Activated CD4-positive, alpha-beta memory T cell treated with anti-CD3 and anti-CD28 coated beads, Interleukin-2, amount 10 ng/mL, durations not matched to agents 7 days and 5 days (primary cell): ENCODE measurements at regions of chr6 and their contacts with region 1.

Region 1: DNA sequence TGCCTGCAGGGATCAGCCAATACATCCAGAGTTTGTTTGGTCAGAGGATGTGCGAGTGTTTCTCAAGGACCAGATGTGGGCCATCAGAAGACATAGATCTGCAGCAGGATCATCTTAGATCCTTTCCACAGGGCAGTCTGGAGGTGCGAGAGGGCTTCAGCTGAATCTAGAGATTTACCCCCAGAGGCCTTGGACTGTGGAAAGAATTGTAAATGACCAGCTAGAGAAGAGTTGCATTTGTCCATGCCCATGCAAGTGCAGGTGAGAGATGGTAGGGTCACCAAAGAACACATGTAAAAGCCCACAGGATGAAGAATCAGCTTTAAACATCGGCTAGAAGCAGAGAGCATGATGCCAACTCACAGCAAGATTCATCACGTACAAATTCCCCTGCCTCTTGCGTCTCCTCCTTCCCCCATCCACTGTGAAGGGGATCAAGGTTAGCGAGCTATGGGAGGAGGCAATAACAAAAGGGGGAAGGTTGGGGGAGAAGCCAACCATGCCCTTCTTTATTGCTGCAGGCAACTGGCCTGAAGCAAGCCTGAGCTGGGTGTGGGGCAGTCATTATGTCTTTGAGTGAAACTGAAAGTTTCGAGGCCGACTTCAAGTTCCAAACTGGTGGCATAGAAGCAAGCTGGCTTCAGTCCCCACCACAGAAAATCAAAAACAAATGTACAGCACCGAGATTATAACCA is 83.5 kb downstream of the SCML4 start:
- DNase-seq: peak; percentile 45
- H3K4me3 Mint-ChIP-seq: peak overlapping the region; percentile 57
- H3K27ac Mint-ChIP-seq: peak overlapping the region; percentile 66
- H3K4me1 Mint-ChIP-seq: peaks cover 51% of the 10 kb centered on the region
- H3K27me3 Mint-ChIP-seq: peaks cover 9% of the 10 kb centered on the region

Region 2: GRCh38 chr6:107634324-107635056 is 106.2 kb before region 1 on chr6:
- CTCF ChIA-PET with region 1: no interaction called
- POLR2A ChIA-PET with region 1: no interaction called
- DNase-seq: no peak
- H3K4me3 Mint-ChIP-seq: no peak overlapping the region
- H3K27ac Mint-ChIP-seq: no peak overlapping the region
- H3K4me1 Mint-ChIP-seq: peaks cover 7% of the 10 kb centered on the region
- H3K27me3 Mint-ChIP-seq: peaks cover 71% of the 10 kb centered on the region

Region 3: DNA sequence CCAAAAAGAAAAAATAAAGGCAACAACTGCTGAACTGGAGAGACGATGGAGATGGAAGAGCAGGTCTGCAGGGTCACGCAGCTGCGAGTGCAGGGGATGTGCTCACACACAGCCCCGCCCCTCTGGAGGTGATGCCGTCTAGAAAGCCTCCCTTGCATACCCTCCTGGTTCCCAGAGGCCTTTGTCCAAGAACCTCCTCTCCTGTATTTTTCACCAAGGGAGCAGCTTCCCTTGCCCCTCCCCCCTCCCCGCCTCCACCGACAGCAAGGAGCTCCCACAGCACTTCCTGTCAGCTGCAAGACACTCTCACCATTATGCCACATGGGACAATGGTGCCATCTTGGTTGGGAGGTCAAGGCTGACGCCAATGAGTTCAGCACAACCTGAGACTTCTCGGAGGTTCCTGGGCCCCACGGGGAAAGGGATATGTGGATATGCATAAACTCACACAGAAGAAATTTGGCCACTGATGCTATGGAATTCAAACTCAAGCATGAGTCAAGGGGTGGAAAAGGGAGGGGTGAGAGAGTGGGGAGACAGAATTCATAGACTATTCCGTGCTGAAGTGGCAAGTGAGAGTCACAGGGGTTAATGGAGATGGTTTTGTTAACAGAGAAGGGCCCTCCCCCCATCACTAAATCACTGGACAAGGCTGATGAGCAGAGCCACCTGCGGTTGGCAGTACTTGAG is 49.4 kb before region 1 on chr6:
- CTCF ChIA-PET with region 1: no interaction called
- POLR2A ChIA-PET with region 1: no interaction called
- DNase-seq: no peak
- H3K4me3 Mint-ChIP-seq: no peak overlapping the region
- H3K27ac Mint-ChIP-seq: no peak overlapping the region
- H3K4me1 Mint-ChIP-seq: no peaks in the 10 kb centered on the region
- H3K27me3 Mint-ChIP-seq: peaks cover 3% of the 10 kb centered on the region

Region 4: GRCh38 chr6:107786709-107787588 is 46.3 kb after region 1 on chr6:
- CTCF ChIA-PET with region 1: interaction called, 4 read pairs
- POLR2A ChIA-PET with region 1: interaction called, 16 read pairs
- DNase-seq: peak; percentile 61
- H3K4me3 Mint-ChIP-seq: peak overlapping the region; percentile 54
- H3K27ac Mint-ChIP-seq: peak overlapping the region; percentile 82
- H3K4me1 Mint-ChIP-seq: peaks cover 45% of the 10 kb centered on the region
- H3K27me3 Mint-ChIP-seq: peaks cover 2% of the 10 kb centered on the region